ENCODE measurements at regions of chr12 and their contacts with region 1.

Region 1: GRCh38 chr12:39103552-39104165 is 198.3 kb upstream of the CPNE8 start:
- DNase-seq: peak; percentile 67
- H3K4me3 ChIP-seq: no peak overlapping the region; a peak in 1 of 4 replicates
- H3K27ac ChIP-seq: no peak overlapping the region; a peak in 1 of 4 replicates
- H3K4me1 ChIP-seq: no peaks in the 10 kb centered on the region
- H3K27me3 ChIP-seq: no peaks in the 10 kb centered on the region
- CTCF ChIP-seq: peak; percentile 81
- EP300 ChIP-seq: no peak
- RAD21 ChIP-seq: peak; percentile 97

Region 2: GRCh38 chr12:38327356-38327755 is 776.3 kb before region 1 on chr12:
- CTCF ChIA-PET with region 1: interaction called, 10 read pairs
- POLR2A ChIA-PET with region 1: no interaction called
- DNase-seq: no peak
- H3K4me3 ChIP-seq: no peak overlapping the region
- H3K27ac ChIP-seq: no peak overlapping the region
- H3K4me1 ChIP-seq: no peaks in the 10 kb centered on the region; a peak in 1 of 4 replicates
- H3K27me3 ChIP-seq: no peaks in the 10 kb centered on the region
- CTCF ChIP-seq: no peak
- EP300 ChIP-seq: no peak
- RAD21 ChIP-seq: no peak

Region 3: DNA sequence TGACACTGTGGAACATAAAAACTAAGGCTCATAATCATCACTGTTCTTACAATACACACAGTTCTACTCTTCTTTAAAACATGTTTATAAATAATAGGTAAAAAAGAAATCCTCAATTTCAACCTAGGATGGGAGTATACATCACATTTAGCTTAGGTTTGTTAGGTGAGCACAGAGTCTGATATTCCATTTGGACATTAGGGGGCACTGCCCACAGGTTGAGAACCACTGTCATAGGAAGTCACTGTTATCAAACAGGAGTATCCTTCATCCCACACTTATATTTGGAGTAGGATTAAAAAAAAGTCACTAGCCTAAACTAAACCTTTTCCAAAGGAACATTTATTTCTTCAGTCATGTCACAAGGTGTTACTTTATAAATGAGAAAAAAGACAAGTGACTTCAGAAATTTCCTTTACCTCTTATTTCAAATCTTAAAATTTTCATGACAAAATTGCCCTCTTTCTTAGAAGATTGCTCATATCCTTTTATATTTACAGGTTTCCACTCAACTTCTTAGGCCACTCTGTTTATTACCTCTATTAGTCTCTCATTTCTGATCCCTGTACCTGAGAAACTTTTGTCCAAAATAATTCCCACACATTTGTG is 438.9 kb before region 1 on chr12:
- CTCF ChIA-PET with region 1: interaction called, 11 read pairs
- POLR2A ChIA-PET with region 1: no interaction called
- DNase-seq: peak; percentile 26
- H3K4me3 ChIP-seq: peak overlapping the region in 1 of 2 experiments; percentile 35; a peak in 1 of 4 replicates
- H3K27ac ChIP-seq: peak overlapping the region in 1 of 2 experiments; percentile 64; a peak in 2 of 4 replicates
- H3K4me1 ChIP-seq: no peaks in the 10 kb centered on the region; a peak in 2 of 4 replicates
- H3K27me3 ChIP-seq: no peaks in the 10 kb centered on the region
- CTCF ChIP-seq: peak; percentile 55
- EP300 ChIP-seq: no peak
- RAD21 ChIP-seq: peak; percentile 60

Region 4: DNA sequence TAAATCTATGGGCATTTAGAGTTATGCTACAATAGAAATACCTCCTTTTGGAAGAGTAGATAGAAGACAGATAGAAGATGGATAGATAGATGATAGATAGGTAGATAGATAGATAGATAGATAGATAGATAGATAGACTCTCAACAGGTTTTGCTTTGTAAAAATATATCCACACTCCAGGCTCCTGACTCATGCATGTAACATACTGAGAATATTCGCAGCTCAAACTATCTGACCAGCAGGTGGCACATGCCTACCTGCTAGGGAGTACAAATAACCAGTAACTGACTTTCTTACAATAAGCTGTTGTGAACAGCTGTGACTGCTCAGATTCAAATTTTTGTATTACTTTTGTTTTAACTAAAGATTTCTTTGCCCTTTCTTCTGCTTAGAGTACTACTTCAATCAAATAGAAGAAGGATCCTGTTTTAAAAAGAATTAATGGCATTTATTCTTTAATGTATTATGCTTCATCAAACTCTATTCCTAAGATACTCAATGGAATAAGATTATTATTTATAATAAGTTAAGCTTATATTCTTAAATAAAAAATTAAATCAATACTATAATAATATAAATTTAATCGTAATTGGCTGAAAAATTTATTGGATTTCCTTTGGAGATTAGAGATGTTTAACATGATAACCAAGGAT is 182.5 kb before region 1 on chr12:
- CTCF ChIA-PET with region 1: interaction called, 68 read pairs
- POLR2A ChIA-PET with region 1: interaction called, 3 read pairs
- DNase-seq: peak; percentile 25
- H3K4me3 ChIP-seq: no peak overlapping the region
- H3K27ac ChIP-seq: no peak overlapping the region
- H3K4me1 ChIP-seq: peaks cover 0 to 2% of the 10 kb centered on the region in 2 experiments; a peak in 1 of 4 replicates
- H3K27me3 ChIP-seq: no peaks in the 10 kb centered on the region
- CTCF ChIP-seq: peak; percentile 65
- EP300 ChIP-seq: no peak
- RAD21 ChIP-seq: peak; percentile 78

Region 5: DNA sequence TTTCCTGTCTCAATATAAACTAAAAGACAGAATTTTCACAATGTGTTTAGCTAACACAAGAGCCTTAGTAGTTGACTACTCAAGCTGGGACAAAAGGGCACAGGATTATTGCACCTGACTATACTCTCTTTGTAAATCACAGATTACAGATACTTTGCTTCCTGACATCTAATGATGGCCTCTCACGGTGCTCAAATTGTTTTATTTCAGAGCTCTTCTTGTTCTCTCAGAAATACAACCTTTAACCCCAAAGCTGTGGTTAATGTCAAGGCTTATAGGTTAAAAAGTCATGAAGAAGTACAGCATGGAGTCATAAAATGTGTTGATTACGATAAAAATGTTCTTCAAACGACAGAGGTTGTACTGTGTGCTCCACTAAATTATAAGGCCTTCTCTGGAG is 108.4 kb before region 1 on chr12:
- CTCF ChIA-PET with region 1: no interaction called
- POLR2A ChIA-PET with region 1: no interaction called
- DNase-seq: no peak
- H3K4me3 ChIP-seq: no peak overlapping the region
- H3K27ac ChIP-seq: no peak overlapping the region
- H3K4me1 ChIP-seq: no peaks in the 10 kb centered on the region; a peak in 1 of 4 replicates
- H3K27me3 ChIP-seq: no peaks in the 10 kb centered on the region
- CTCF ChIP-seq: no peak
- EP300 ChIP-seq: no peak
- RAD21 ChIP-seq: no peak

Region 6: DNA sequence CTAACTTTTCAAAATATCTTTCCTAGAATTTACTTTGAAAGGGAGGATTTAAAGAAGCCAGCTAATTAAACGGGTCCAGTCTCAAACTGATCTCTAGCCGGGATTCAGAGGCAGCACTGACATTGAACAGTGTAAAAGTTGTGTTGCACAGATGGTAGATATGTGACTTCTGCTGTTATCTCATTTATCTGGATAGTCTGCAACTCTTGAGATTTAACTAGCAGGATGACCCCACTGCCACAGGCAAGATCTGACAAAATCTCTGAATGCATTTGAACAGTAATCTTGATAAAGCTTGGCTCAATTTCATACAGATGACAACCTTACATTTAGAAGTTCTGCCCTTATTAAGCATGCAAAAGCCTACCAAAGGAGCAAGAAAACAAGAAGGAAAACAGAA is 60.2 kb before region 1 on chr12:
- CTCF ChIA-PET with region 1: interaction called, 25 read pairs
- POLR2A ChIA-PET with region 1: no interaction called
- DNase-seq: peak; percentile 48
- H3K4me3 ChIP-seq: no peak overlapping the region
- H3K27ac ChIP-seq: peak overlapping the region in 1 of 2 experiments; percentile 91; a peak in 2 of 4 replicates
- H3K4me1 ChIP-seq: peaks cover 0 to 15% of the 10 kb centered on the region in 2 experiments; a peak in 3 of 4 replicates
- H3K27me3 ChIP-seq: no peaks in the 10 kb centered on the region
- CTCF ChIP-seq: no peak
- EP300 ChIP-seq: peak in 1 of 2 experiments; percentile 97; a peak in 2 of 4 replicates
- RAD21 ChIP-seq: no peak

Region 7: GRCh38 chr12:39125566-39125965 is 21.9 kb after region 1 on chr12:
- CTCF ChIA-PET with region 1: interaction called, 11 read pairs
- POLR2A ChIA-PET with region 1: no interaction called
- DNase-seq: no peak
- H3K4me3 ChIP-seq: no peak overlapping the region
- H3K27ac ChIP-seq: no peak overlapping the region
- H3K4me1 ChIP-seq: peaks cover 3 to 4% of the 10 kb centered on the region in 2 experiments; a peak in 1 of 4 replicates
- H3K27me3 ChIP-seq: no peaks in the 10 kb centered on the region
- CTCF ChIP-seq: no peak
- EP300 ChIP-seq: no peak
- RAD21 ChIP-seq: no peak

Region 8: DNA sequence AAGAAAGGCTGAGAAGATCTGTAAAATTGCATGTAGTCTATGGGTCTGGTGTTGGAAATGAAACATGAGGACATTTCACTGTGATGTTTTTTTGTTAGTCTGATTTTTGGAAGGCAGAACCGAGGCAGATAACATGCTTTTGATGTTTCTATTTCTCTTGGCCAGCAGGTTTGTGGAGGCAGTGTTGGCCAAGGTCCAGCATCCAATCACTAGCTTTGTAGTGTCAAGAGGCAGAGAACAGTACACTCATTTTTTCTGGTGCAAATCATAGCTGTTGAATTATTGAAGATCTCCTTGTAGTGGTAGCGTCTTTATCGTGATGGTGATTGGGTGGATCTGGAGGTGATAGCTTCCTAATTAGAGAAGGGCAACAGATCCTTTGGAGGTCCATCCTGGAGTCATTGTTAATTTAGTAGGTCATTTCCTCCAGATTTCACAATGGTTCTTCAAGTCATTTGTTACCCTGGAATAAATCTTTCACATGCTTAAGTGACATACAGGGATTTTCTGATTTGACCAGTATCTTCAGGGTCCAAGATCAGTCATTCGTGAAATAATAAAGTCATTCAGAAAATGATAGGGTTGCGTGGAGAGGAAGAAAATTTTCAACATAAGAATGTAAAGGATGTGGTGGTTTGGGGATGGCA is 54.2 kb after region 1 on chr12:
- CTCF ChIA-PET with region 1: no interaction called
- POLR2A ChIA-PET with region 1: no interaction called
- DNase-seq: no peak
- H3K4me3 ChIP-seq: no peak overlapping the region
- H3K27ac ChIP-seq: no peak overlapping the region
- H3K4me1 ChIP-seq: no peaks in the 10 kb centered on the region
- H3K27me3 ChIP-seq: no peaks in the 10 kb centered on the region
- CTCF ChIP-seq: no peak
- EP300 ChIP-seq: no peak
- RAD21 ChIP-seq: no peak

Measured in SK-N-SH (cell line).